ENCODE measurements at regions of chrX and their contacts with region 1.

Region 1: GRCh38 chrX:133668225-133668931 is 253.1 kb upstream of the GPC4 start:
- DNase-seq: no peak
- ATAC-seq: no peak
- H3K4me3 ChIP-seq: no peak overlapping the region
- H3K27ac ChIP-seq: no peak overlapping the region
- H3K4me1 ChIP-seq: no peaks in the 10 kb centered on the region
- H3K27me3 ChIP-seq: no peaks in the 10 kb centered on the region
- CTCF ChIP-seq: no peak

Region 2: GRCh38 chrX:133335027-133335426 is 333.4 kb before region 1 on chrX:
- CTCF ChIA-PET with region 1: interaction called, 5 read pairs
- POLR2A ChIA-PET with region 1: no interaction called
- in situ Hi-C with region 1: no loop called
- intact Hi-C with region 1: loop called (anchors 5 kb)
- DNase-seq: no peak
- ATAC-seq: no peak
- H3K4me3 ChIP-seq: no peak overlapping the region
- H3K27ac ChIP-seq: no peak overlapping the region
- H3K4me1 ChIP-seq: no peaks in the 10 kb centered on the region
- H3K27me3 ChIP-seq: no peaks in the 10 kb centered on the region
- CTCF ChIP-seq: peak; percentile 71

Region 3: GRCh38 chrX:133652185-133652584 is 16.2 kb before region 1 on chrX:
- CTCF ChIA-PET with region 1: no interaction called
- POLR2A ChIA-PET with region 1: no interaction called
- in situ Hi-C with region 1: no loop called
- intact Hi-C with region 1: no loop called
- DNase-seq: no peak
- ATAC-seq: no peak
- H3K4me3 ChIP-seq: no peak overlapping the region
- H3K27ac ChIP-seq: no peak overlapping the region
- H3K4me1 ChIP-seq: no peaks in the 10 kb centered on the region
- H3K27me3 ChIP-seq: no peaks in the 10 kb centered on the region
- CTCF ChIP-seq: no peak